Heart right ventricle (tissue), 16 donors: ENCODE measurements at regions of chr10 and their contacts with region 1.

Region 1: DNA sequence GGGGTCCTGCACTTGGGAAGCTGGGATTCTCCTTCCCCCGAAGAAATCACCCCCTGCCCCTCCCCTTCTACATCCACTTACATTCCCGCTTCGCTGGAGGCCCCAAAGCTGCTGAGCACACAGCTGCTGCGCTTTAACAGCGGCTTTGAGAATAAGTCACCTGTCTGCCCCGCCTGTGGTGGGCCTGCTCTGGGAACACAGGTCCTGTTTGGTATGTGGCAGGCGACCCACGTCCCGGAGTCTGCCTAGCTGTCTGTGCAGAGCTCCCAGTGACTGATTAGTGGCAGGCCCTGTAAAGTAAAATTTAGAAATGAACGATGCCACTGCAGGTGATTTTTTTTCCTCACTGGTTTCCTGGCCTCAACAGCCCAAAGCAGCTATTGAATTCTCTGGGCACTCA is 47.0 kb downstream of the CDH23 start:
- DNase-seq: no peak
- ATAC-seq: no peak
- H3K4me3 ChIP-seq: no peak overlapping the region
- H3K27ac ChIP-seq: no peak overlapping the region
- H3K4me1 ChIP-seq: peaks cover 0 to 19% (median 5%) of the 10 kb centered on the region in 9 donors
- H3K27me3 ChIP-seq: no peaks in the 10 kb centered on the region
- CTCF ChIP-seq: no peak

Region 2: DNA sequence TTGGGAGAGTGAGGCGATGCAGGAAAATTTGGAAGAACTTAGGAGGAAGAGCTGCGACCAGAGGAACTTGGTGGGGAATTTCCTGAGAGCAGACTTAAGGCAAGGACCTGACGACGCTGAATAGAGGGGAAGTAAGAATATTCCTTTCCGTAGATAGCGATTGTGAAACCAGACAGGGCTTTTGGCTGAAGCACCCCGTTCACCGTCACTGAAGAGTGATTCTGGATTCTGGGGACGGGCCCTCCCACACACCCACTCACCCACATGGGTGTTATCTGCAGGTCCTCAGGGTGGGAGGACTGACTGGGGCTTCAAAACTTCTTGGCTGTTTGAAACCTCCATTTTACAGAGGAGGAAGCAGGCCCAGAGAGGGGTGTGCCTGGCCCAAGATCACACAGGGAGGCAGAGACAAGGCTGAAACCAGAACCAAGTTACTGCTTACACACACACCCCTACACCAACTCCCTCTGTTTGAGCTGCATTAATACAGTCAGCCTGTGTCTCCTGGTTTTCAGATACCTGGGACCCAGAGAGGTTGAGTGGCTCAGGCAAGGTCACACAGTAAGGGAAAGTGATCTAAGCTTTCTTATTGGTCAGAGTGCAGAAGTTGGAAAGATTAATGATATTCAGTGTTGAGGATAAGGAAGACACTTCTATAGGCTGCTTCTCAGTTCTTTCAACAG is 84.2 kb before region 1 on chr10:
- intact Hi-C with region 1: no loop called
- DNase-seq: peak in 1 of 2 donors; percentile 25
- ATAC-seq: peak; percentile 41 to 71 (median 61)
- H3K4me3 ChIP-seq: no peak overlapping the region
- H3K27ac ChIP-seq: peak overlapping the region in 6 of 10 donors; percentile 14 to 81 (median 44)
- H3K4me1 ChIP-seq: peaks cover 0 to 38% (median 0%) of the 10 kb centered on the region in 9 donors
- H3K27me3 ChIP-seq: no peaks in the 10 kb centered on the region
- CTCF ChIP-seq: no peak

Region 3: DNA sequence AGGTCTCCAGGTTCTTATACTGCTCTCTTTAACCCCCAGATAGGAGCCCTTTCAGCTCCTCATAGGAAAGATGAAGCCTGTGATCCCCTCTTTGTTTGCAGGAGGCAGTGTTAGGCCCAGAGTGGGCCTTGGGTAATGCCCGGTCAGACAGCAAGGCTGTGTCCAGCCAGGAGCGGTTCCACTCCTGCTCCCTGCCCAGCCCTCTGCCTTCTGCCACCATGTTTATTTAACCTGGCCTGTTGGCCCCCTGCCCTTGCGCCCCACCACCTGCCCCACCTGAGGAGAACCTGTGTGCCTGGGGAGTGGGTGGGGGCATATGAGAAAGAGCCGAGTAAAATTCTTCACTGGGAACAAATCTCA is 22.6 kb before region 1 on chr10:
- intact Hi-C with region 1: loop called in 1 of 10 experiments (anchors 1 kb)
- DNase-seq: no peak
- ATAC-seq: no peak
- H3K4me3 ChIP-seq: no peak overlapping the region
- H3K27ac ChIP-seq: no peak overlapping the region
- H3K4me1 ChIP-seq: peaks cover 0 to 8% (median 0%) of the 10 kb centered on the region in 9 donors
- H3K27me3 ChIP-seq: peaks cover 0 to 2% (median 0%) of the 10 kb centered on the region in 7 donors
- CTCF ChIP-seq: no peak

Region 4: DNA sequence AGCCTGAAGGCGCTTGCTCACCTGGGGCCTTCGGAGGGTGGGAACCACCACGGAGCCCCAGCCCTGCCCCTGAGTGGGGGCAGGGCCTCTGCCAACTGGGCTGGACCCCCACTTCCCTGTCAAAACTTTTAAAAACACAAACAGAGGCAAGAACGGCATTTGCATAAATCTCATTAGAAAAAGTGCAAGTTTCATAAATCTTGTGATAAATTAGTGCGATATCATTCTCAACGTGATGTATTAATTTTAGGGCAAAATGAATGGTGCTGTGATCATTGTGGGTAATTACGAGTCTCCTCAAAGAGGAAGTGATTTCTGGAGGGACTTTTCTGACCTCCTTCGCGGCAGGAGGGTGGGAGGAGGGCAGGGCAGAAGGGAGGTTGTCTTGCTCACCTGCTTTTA is 51.3 kb after region 1 on chr10:
- intact Hi-C with region 1: no loop called
- DNase-seq: no peak
- ATAC-seq: no peak
- H3K4me3 ChIP-seq: no peak overlapping the region
- H3K27ac ChIP-seq: no peak overlapping the region
- H3K4me1 ChIP-seq: peaks cover 0 to 7% (median 0%) of the 10 kb centered on the region in 9 donors
- H3K27me3 ChIP-seq: no peaks in the 10 kb centered on the region
- CTCF ChIP-seq: no peak